ENCODE measurements at regions of chr14 and their contacts with region 1.

Region 1: DNA sequence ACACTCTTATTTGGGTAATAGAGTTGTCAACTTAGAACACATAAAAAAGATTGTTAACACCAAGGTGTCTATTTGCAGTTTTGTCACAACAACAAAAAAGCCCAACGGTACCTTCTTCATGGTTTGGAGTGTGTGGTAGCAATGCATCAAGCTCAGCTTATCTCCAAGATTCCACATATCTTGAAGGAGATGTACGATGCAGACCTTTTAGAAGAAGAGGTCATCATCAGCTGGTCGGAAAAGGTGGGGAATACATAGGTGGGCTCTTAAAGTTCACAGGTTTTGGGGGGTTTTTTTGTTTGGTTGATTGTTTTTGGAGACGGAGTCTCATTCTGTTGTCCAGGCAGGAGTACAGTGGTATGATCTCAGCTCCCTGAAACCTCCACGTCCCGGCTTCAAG is 5.5 kb downstream of the EIF5 start:
- DNase-seq: no peak
- H3K4me3 ChIP-seq: no peak overlapping the region
- H3K27ac ChIP-seq: 0 out of 2 replicates have a peak overlapping the region, but pooled peaks have one; percentile 3
- H3K4me1 ChIP-seq: peaks cover 27% of the 10 kb centered on the region
- H3K27me3 ChIP-seq: no peaks in the 10 kb centered on the region
- CTCF ChIP-seq: no peak

Region 2: GRCh38 chr14:102973706-102974285 is 365.8 kb before region 1 on chr14:
- CTCF ChIA-PET with region 1: interaction called, 17 read pairs
- POLR2A ChIA-PET with region 1: no interaction called
- intact Hi-C with region 1: no loop called
- DNase-seq: no peak
- H3K4me3 ChIP-seq: no peak overlapping the region
- H3K27ac ChIP-seq: no peak overlapping the region
- H3K4me1 ChIP-seq: no peaks in the 10 kb centered on the region
- H3K27me3 ChIP-seq: no peaks in the 10 kb centered on the region
- CTCF ChIP-seq: no peak